RWPE1 (cell line): ENCODE measurements at regions of chr1 and their contacts with region 1.

Region 1: DNA sequence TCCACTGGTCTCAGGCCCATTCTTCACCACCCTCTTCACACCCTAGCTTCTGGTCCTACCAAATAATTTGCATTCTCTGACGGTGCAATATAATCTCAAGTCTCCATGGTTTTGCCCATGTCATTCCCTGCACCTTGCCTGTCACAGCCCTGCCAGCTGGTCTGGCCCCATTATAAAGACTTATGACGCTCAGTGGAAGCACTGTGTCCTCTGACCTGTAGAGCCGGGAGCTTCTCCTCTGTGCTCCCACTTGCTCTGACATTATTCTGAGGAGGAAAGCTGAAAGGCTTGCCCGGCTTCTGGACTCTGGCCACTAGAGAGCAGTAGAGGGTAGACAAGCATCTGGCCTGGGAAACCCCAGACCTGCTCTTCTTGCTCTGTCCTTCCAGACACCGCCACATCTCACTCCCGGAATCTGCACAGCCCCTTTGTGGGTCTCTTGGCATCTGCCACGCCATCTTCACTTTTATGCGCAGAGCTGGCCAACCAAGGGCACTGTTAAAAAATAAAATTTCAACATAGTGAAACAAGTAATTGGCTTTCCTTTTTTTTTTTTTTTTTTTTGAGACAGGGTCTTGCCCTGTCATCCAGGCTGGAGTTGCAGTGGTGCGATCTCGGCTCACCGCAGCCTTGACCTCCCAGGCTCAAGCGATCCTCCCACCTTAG is 44.4 kb downstream of the NENF start:
- DNase-seq: peak; percentile 79
- H3K27ac ChIP-seq: no peak overlapping the region
- CTCF ChIP-seq: peak; percentile 92

Region 2: DNA sequence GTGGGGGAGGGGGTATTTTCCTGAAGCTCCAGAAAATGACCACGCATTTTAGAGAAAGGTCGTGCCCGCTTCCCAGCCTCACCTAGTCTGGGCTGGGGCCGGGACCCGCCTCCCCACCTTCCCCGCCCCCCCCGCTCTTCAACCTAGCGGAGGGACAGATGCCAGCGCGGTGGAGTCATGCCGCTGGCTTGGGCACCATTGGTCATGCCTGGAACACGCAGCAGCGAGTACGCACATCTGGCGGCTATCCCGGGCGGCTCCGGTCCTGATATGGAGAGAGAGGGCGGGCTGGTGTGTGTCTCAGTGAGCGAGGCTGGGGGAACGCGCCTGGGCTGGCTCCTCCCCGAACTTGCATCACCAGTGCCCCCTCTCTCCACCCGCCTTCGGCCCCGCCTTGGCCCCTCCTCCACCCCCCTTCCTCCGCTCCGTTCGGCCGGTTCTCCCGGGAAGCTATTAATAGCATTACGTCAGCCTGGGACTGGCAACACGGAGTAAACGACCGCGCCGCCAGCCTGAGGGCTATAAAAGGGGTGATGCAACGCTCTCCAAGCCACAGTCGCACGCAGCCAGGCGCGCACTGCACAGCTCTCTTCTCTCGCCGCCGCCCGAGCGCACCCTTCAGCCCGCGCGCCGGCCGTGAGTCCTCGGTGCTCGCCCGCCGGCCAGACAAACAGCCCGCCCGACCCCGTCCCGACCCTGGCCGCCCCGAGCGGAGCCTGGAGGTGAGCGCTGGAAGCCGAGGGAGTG is 131.2 kb after region 1 on chr1 and contains the start of gene ATF3:
- CTCF ChIA-PET with region 1: interaction called, 17 read pairs
- POLR2A ChIA-PET with region 1: no interaction called
- DNase-seq: peak; percentile 99
- H3K27ac ChIP-seq: peak within 1 kb of the TSS; percentile 91
- CTCF ChIP-seq: no peak